Endothelial cell of umbilical vein (primary cell): ENCODE measurements at regions of chr14 and their contacts with region 1.

Region 1: DNA sequence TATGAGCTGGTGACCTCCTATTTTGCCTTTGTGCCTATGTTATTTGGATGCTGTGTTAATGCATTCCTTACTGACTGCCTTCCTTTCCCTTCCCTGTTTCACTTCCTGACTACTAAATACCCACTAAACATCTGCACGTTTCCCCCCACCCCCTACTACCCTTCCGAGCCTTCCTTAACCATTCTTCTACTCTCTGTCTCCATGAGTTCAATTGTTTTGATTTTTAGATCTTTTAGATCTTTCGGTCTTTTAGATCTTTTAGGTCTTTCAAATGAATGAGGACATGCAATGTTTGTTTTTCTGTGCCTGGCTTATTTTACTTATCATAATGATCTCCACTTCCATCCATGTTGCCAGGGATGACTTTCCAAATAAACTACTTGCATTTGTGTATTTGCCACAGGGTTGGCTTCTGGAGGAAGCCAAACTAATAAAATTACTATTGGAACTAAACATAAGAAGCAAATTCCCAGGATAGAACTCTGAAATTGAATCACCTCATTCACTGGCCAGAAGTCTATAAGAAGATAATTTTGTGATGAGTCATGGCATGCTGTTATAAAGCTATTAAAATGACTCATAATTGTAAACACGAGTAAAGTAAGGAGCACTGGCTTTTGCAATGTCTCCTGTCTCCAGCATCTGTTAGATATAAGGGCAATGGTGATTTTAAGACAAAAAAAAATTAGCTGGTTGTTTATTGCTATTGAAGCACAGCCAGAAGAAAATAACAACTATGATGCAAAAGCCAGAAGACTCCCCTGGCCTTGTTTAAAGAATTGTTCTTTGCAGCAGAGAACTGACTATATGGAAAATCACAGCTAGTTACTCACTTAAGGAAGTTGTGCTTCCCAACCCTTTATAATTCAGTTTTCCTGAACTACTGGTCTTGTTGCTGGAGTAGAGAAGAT is 586.3 kb downstream of the LRFN5 start:
- DNase-seq: peak; percentile 80
- H3K4me3 ChIP-seq: peak overlapping the region in 1 of 3 experiments; percentile 45
- H3K27ac ChIP-seq: peak overlapping the region; percentile 95
- H3K4me1 ChIP-seq: peaks cover 23% of the 10 kb centered on the region
- H3K27me3 ChIP-seq: no peaks in the 10 kb centered on the region
- CTCF ChIP-seq: no peak
- POLR2A ChIP-seq: no peak

Region 2: GRCh38 chr14:42214981-42215491 is 22.0 kb after region 1 on chr14:
- CTCF ChIA-PET with region 1: interaction called, 8 read pairs
- POLR2A ChIA-PET with region 1: no interaction called
- dilution Hi-C with region 1: no loop called
- intact Hi-C with region 1: loop called (anchors 1 kb)
- DNase-seq: peak; percentile 63
- H3K4me3 ChIP-seq: no peak overlapping the region
- H3K27ac ChIP-seq: peak overlapping the region; percentile 59
- H3K4me1 ChIP-seq: peaks cover 5% of the 10 kb centered on the region
- H3K27me3 ChIP-seq: no peaks in the 10 kb centered on the region
- CTCF ChIP-seq: no peak
- POLR2A ChIP-seq: no peak

Region 3: DNA sequence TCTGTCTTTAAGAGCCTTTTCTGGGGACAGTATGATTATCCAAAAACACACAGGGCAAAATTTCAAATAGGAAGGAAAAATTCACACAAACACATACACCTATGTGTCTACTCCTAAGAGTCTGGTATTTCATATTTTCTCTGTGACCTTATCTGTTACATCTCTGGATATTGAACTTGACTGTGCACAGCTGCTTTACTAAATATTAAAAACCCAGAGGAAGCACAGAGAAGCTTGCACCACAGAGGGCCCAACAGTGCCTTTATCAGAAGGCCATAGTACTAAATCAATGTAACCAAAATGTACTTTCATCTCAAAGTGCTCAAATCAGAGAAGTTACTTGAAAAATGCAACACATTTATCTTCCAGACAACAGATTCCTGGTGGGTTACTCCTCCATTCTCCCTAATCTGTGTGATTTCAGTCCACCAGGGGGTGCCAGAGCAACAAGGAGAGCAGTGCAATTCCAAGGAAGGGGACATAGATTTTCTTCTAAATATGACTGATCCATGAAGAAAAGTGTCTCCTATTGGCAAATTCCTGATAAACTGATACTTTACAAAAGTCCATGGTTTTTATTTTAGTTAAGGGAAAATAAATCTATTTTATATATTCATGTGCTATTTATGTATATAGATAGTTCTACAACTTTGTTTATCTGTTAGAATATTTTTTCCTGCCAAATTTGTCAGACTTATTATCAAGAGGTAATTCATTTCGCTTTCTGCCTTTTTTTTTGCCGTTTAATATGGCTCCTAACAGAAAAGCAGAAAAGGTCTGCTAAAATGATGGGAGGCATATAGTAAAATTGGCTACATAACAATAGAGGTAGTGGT is 31.3 kb after region 1 on chr14:
- CTCF ChIA-PET with region 1: interaction called, 5 read pairs
- POLR2A ChIA-PET with region 1: no interaction called
- dilution Hi-C with region 1: no loop called
- intact Hi-C with region 1: loop called (anchors 2 kb)
- DNase-seq: peak; percentile 47
- H3K4me3 ChIP-seq: no peak overlapping the region
- H3K27ac ChIP-seq: no peak overlapping the region
- H3K4me1 ChIP-seq: no peaks in the 10 kb centered on the region
- H3K27me3 ChIP-seq: no peaks in the 10 kb centered on the region
- CTCF ChIP-seq: peak; percentile 64 to 65
- POLR2A ChIP-seq: no peak